Activated CD8-positive, alpha-beta memory T cell treated with anti-CD3 and anti-CD28 coated beads, Interleukin-2, amount 10 ng/mL, durations not matched to agents 7 days and 5 days (primary cell): ENCODE measurements at regions of chr3 and their contacts with region 1.

Region 1: GRCh38 chr3:48472915-48473616 is 26.5 kb downstream of the ATRIP start:
- DNase-seq: peak; percentile 99
- ATAC-seq: peak; percentile 88
- H3K4me3 Mint-ChIP-seq: peak overlapping the region; percentile 85
- H3K27ac Mint-ChIP-seq: peak overlapping the region; percentile 95
- H3K4me1 Mint-ChIP-seq: peaks cover 73% of the 10 kb centered on the region
- H3K27me3 Mint-ChIP-seq: no peaks in the 10 kb centered on the region

Region 2: GRCh38 chr3:48268381-48269183 is 204.5 kb before region 1 on chr3:
- CTCF ChIA-PET with region 1: no interaction called
- DNase-seq: peak; percentile 90
- ATAC-seq: peak; percentile 98
- H3K4me3 Mint-ChIP-seq: peak overlapping the region; percentile 25
- H3K27ac Mint-ChIP-seq: peak overlapping the region; percentile 76
- H3K4me1 Mint-ChIP-seq: peaks cover 33% of the 10 kb centered on the region
- H3K27me3 Mint-ChIP-seq: no peaks in the 10 kb centered on the region

Region 3: DNA sequence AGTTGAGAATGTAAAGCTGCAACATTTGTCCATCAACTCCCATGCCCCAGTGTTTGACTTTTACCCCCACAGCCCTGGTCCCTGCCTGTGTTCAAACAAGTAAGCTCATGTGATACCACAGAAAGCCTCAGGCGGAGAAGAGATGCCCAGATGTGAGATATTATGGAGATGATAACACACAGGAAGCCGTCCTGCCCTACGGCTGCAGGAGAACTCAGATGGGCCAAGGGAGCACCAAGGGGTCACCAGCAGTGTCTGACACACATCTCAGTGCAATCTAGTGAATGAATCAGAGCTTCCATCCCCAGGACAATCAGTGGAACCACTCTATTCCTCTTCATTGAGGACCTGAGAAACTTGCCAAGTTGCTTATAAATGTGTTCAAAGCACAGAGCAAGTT is 125.6 kb before region 1 on chr3:
- CTCF ChIA-PET with region 1: no interaction called
- DNase-seq: no peak
- ATAC-seq: no peak
- H3K4me3 Mint-ChIP-seq: no peak overlapping the region
- H3K27ac Mint-ChIP-seq: no peak overlapping the region
- H3K4me1 Mint-ChIP-seq: no peaks in the 10 kb centered on the region
- H3K27me3 Mint-ChIP-seq: peaks cover 27% of the 10 kb centered on the region

Region 4: GRCh38 chr3:48394391-48394790 is 78.7 kb before region 1 on chr3:
- CTCF ChIA-PET with region 1: no interaction called
- DNase-seq: no peak
- ATAC-seq: peak; percentile 39
- H3K4me3 Mint-ChIP-seq: no peak overlapping the region
- H3K27ac Mint-ChIP-seq: no peak overlapping the region
- H3K4me1 Mint-ChIP-seq: no peaks in the 10 kb centered on the region
- H3K27me3 Mint-ChIP-seq: peaks cover 19% of the 10 kb centered on the region

Region 5: DNA sequence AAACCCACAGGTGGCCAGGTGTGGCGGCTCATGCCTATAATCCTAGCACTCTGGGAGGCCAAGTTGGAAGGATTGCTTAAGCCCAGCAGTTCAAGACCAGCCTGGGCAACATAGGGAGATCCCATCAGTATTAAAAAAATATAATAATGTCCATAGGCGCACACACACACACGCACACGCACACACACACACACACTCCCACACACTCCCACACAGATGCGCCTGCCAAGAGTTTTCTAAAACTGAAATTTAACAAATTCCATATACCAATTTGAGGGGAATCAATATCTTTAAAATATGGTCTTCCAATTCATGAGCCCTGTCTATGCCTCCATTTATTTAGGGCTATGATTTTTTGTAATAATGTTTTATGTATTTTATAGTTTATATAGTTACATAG is 13.9 kb after region 1 on chr3:
- CTCF ChIA-PET with region 1: no interaction called
- DNase-seq: no peak
- ATAC-seq: no peak
- H3K4me3 Mint-ChIP-seq: no peak overlapping the region
- H3K27ac Mint-ChIP-seq: no peak overlapping the region
- H3K4me1 Mint-ChIP-seq: peaks cover 2% of the 10 kb centered on the region
- H3K27me3 Mint-ChIP-seq: no peaks in the 10 kb centered on the region

Region 6: DNA sequence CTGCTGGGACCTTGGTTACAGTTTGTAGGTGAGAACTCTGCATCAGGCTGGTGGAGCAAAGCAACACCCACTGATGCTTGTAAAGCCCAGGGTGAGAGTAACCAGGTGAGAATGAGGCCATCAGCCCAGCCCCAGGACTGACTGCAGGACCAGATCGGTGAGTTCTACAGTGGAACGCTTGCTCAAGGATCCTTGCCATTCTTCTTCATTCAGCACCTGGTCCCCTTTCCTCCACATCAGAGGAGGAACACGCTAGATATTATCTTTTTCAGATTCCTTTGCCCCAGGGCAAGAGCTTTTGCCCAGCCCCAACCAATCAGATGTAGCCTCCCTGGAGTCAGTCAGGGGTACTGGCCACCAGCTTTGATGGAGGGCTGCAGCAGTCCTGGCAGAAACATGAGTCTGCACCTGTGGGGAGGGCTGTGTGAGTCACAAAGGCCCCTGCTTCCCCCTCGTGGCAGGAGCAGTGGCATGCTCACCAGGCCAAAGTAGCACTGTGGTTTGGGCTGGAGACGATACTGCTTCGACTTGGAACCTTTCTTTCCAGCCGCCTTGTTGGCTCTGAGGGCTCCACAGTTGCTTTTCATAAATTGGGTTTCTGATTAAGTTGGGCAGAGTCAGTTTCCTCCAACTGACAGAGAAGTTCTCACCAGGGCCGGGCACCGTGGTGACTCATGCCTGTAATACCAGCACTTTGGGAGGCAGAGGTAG is 34.4 kb after region 1 on chr3:
- CTCF ChIA-PET with region 1: interaction called, 101 read pairs
- DNase-seq: peak; percentile 89
- ATAC-seq: peak; percentile 83
- H3K4me3 Mint-ChIP-seq: peak overlapping the region; percentile 16
- H3K27ac Mint-ChIP-seq: peak overlapping the region; percentile 77
- H3K4me1 Mint-ChIP-seq: peaks cover 40% of the 10 kb centered on the region
- H3K27me3 Mint-ChIP-seq: peaks cover 6% of the 10 kb centered on the region

Region 7: DNA sequence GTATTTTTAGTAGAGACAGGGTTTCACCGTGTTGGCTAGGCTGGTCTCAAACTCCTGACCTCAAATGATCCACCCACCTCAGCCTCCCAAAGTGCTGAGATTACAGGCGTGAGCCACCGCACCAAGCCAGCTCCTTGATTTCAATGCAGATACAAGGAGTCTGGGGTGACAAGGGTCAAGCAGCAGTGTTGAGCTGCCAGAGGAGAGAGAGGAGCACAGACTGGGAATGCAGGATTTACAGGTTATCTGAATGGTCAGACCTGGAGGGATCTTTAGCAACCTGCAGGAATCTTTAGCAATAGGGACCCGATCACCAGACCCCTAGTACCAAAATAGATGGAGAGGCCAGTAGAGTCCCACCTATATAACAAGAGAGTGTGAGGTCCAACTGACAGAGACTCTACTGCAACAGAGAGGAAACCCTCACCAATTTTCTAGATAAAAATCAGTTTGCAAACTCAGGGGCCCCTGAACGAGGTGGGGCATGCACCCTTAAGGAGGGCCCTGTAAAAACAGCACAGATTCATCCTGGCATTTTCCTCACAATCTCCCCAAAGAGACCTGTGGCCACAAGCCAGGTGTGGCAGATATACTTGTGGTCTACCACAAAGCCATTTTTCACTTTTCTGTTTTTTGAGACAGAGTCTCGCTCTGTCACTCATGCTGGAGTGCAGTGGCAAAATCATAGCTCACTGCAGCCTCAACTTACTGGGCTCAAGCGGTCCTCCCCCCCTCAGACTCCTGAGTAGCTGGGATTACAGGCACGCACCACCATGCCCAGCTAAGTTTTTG is 41.6 kb after region 1 on chr3:
- CTCF ChIA-PET with region 1: interaction called, 101 read pairs
- DNase-seq: peak; percentile 78
- ATAC-seq: peak; percentile 75
- H3K4me3 Mint-ChIP-seq: peak overlapping the region; percentile 30
- H3K27ac Mint-ChIP-seq: peak overlapping the region; percentile 68
- H3K4me1 Mint-ChIP-seq: peaks cover 55% of the 10 kb centered on the region
- H3K27me3 Mint-ChIP-seq: peaks cover 5% of the 10 kb centered on the region

Region 8: GRCh38 chr3:48556793-48557626 is 83.9 kb after region 1 on chr3 and contains the start of gene PFKFB4:
- CTCF ChIA-PET with region 1: interaction called, 27 read pairs
- DNase-seq: peak; percentile 100
- ATAC-seq: peak; percentile 89
- H3K4me3 Mint-ChIP-seq: peak within 1 kb of the TSS; percentile 84
- H3K27ac Mint-ChIP-seq: peak within 1 kb of the TSS; percentile 86
- H3K4me1 Mint-ChIP-seq: peaks cover 47% of the 10 kb centered on the region
- H3K27me3 Mint-ChIP-seq: no peaks in the 10 kb centered on the region
- total RNA-seq, gene PFKFB4: 12.2 to 26.9 TPM